Activated CD4-positive, alpha-beta T cell treated with anti-CD3 and anti-CD28 coated beads for 36 hours (primary cell): ENCODE measurements at regions of chr1 and their contacts with region 1.

Region 1: DNA sequence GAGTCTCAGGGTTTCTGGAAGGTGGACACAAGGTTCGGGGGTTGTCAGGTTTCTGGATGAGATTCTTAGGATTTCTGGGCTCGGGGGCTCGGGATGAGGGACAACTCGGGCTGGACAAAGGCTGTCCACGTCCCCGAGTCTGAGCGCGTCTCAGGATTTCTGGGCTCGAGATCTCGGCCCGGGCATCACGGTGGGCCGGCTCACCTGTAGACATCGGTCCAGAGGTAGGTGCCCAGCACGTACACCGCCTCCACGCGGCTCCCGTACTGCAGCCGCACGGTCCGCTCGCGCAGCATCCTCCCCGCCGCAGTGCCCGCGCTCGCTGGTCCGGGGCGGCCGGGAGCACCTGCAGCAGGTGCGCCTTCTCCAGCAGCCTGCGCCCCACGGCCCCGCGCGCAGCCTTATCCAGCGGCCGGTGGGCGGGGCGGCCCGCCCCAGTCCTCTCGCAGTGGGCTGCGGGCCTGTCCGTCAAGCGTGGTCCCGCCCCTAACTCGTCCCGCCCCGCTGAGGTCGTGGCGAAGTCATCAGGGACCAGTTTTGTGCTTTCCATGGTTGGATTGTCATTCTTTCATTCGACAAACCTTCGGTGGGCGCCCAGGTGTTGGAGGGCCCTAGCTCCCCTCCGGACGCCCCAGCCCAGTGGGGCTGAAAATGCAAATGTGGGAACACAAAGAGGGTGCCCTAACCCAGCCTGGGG is at the start of gene PADI2:
- DNase-seq: peak; percentile 81
- ATAC-seq: peak; percentile 98
- H3K4me3 Mint-ChIP-seq: peak within 1 kb of the TSS; percentile 3
- H3K27ac Mint-ChIP-seq: no peak within 1 kb of the TSS
- H3K4me1 Mint-ChIP-seq: peaks cover 7% of the 10 kb centered on the region
- H3K27me3 Mint-ChIP-seq: peaks cover 30% of the 10 kb centered on the region
- total RNA-seq, gene PADI2: 0.05 TPM in 1 of 2 experiments, not detected in the other

Region 2: DNA sequence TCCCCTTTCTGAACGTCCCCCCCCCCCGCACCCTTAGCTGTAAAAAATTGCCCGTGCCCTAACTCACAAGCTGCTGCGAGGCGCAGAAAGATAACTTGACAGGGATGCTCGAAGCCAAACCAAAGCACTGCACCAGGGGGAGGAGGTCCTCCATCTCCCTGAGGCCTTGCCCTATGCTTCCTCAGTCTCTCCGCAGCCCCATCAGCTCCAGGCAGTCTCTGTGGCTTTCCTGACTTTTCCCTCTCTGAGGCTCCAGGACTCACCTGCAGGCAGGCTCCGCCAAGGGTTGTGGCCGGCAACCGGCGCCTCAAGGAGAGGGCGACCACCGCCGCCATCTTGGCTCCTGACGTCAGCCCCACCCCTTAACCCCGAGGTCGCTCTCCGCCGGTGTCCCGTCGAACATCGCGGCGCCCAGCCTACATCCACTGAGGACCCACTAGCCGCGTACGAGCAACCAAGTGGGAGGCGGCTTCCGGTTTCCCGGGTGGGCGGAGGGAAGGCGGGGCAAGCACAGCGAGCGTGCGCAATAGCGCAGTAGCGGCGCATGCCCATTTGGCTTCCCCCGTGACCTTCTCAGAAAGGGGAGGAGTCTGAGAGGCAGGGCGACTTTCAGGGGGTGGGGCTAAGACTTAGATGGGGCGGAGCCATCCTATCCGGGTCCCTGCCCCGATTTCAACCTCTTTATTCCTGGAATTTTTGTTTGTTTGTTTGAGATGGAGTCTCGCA is 65.4 kb before region 1 on chr1 and contains the start of gene SDHB:
- CTCF ChIA-PET with region 1: no interaction called
- POLR2A ChIA-PET with region 1: no interaction called
- intact Hi-C with region 1: loop called in 1 of 2 experiments (anchors 2 kb)
- DNase-seq: peak; percentile 100
- ATAC-seq: peak; percentile 99
- H3K4me3 Mint-ChIP-seq: peak within 1 kb of the TSS; percentile 94
- H3K27ac Mint-ChIP-seq: peak within 1 kb of the TSS; percentile 97
- H3K4me1 Mint-ChIP-seq: peaks cover 21% of the 10 kb centered on the region
- H3K27me3 Mint-ChIP-seq: peaks cover 3% of the 10 kb centered on the region
- total RNA-seq, gene SDHB: 132 to 149 TPM

Region 3: DNA sequence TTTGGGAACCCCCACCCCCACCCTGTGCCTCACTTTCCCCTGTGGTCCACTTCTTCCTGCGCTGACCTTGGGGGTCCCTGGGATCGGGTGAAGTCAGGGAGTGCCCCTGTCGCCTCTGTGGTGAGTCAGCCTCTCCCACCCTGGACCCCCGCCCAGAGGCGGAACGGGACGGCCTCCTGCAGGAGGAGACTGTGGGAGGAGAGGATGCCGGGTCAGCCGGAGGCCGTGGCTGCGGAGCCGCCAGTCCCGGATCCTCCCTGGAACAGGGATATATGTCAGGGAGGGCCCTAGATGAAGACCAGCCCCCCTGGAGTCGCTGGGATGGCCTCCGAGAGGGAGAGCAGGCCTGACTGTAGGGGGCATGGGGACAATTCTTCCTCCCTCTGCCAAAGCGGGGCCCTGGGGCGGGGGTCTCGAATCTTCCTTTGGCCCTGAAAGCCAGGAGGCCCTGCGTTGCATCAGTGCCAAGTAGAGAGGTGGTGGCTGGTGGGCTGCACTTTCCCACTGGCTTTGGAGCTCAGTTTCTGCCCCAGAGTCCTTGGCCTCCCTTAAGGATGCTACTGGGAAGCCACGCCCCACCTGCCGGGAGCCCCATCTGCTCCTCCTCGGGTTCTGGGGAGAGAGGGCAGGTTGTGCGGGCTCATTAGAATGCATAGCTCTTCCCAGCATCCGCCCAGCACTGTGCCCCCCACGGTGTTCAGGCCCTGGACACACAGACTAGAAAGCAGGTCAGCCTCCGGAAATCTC is 421.2 kb after region 1 on chr1:
- CTCF ChIA-PET with region 1: no interaction called
- POLR2A ChIA-PET with region 1: no interaction called
- intact Hi-C with region 1: no loop called
- DNase-seq: no peak
- ATAC-seq: no peak
- H3K4me3 Mint-ChIP-seq: no peak overlapping the region
- H3K27ac Mint-ChIP-seq: no peak overlapping the region
- H3K4me1 Mint-ChIP-seq: peaks cover 4% of the 10 kb centered on the region
- H3K27me3 Mint-ChIP-seq: peaks cover 36% of the 10 kb centered on the region